ENCODE measurements at regions of chr7 and their contacts with region 1.

Region 1: GRCh38 chr7:131654668-131655326 is 98.4 kb upstream of the PODXL start:
- DNase-seq: peak; percentile 84 to 94 (median 86)
- H3K4me3 ChIP-seq: no peak overlapping the region
- H3K27ac ChIP-seq: no peak overlapping the region
- H3K4me1 ChIP-seq: no peaks in the 10 kb centered on the region
- H3K27me3 ChIP-seq: no peaks in the 10 kb centered on the region
- CTCF ChIP-seq: peak; percentile 77 to 94 (median 81)
- EP300 ChIP-seq: no peak
- POLR2A ChIP-seq: no peak

Region 2: GRCh38 chr7:131346885-131347592 is 307.8 kb before region 1 on chr7:
- intact Hi-C with region 1: no loop called
- DNase-seq: no peak
- H3K4me3 ChIP-seq: no peak overlapping the region
- H3K27ac ChIP-seq: no peak overlapping the region
- H3K4me1 ChIP-seq: peaks cover 4% of the 10 kb centered on the region
- H3K27me3 ChIP-seq: no peaks in the 10 kb centered on the region
- CTCF ChIP-seq: no peak
- EP300 ChIP-seq: no peak
- POLR2A ChIP-seq: no peak

Region 3: GRCh38 chr7:131507592-131508331 is 147.0 kb before region 1 on chr7:
- intact Hi-C with region 1: loop called in 3 of 4 experiments (anchors 2 to 5 kb)
- DNase-seq: peak; percentile 82 to 93 (median 88)
- H3K4me3 ChIP-seq: no peak overlapping the region
- H3K27ac ChIP-seq: no peak overlapping the region
- H3K4me1 ChIP-seq: peaks cover 12% of the 10 kb centered on the region
- H3K27me3 ChIP-seq: no peaks in the 10 kb centered on the region
- CTCF ChIP-seq: peak; percentile 86 to 93 (median 91)
- EP300 ChIP-seq: no peak
- POLR2A ChIP-seq: no peak

Region 4: GRCh38 chr7:131546583-131547111 is 108.2 kb before region 1 on chr7:
- intact Hi-C with region 1: loop called in 1 of 4 experiments (anchors 5 kb)
- DNase-seq: peak in 1 of 5 donors; percentile 44
- H3K4me3 ChIP-seq: no peak overlapping the region
- H3K27ac ChIP-seq: no peak overlapping the region
- H3K4me1 ChIP-seq: peaks cover 3% of the 10 kb centered on the region
- H3K27me3 ChIP-seq: no peaks in the 10 kb centered on the region
- CTCF ChIP-seq: no peak
- EP300 ChIP-seq: no peak
- POLR2A ChIP-seq: no peak